ENCODE measurements at regions of chr6 and their contacts with region 1.

Region 1: GRCh38 chr6:132962936-132963868 is 148.8 kb downstream of the RPS12 start:
- DNase-seq: peak; percentile 66 to 91
- H3K4me3 ChIP-seq: no peak overlapping the region
- H3K27ac ChIP-seq: no peak overlapping the region
- H3K4me1 ChIP-seq: peaks cover 0 to 5% (median under 1%) of the 10 kb centered on the region in 4 experiments; a peak in 2 of 7 replicates
- H3K27me3 ChIP-seq: no peaks in the 10 kb centered on the region
- CTCF ChIP-seq: peak; percentile 72 to 88 (median 83)
- EP300 ChIP-seq: no peak
- POLR2A ChIP-seq: no peak
- RAD21 ChIP-seq: peak; percentile 94

Region 2: GRCh38 chr6:132780770-132781371 is 182.3 kb before region 1 on chr6:
- CTCF ChIA-PET with region 1: no interaction called
- POLR2A ChIA-PET with region 1: no interaction called
- DNase-seq: no peak
- H3K4me3 ChIP-seq: no peak overlapping the region
- H3K27ac ChIP-seq: no peak overlapping the region
- H3K4me1 ChIP-seq: no peaks in the 10 kb centered on the region
- H3K27me3 ChIP-seq: no peaks in the 10 kb centered on the region
- CTCF ChIP-seq: peak in 1 of 3 experiments; percentile 20; a peak in 1 of 4 replicates
- EP300 ChIP-seq: no peak
- POLR2A ChIP-seq: no peak
- RAD21 ChIP-seq: peak in 1 of 2 experiments; percentile 22; a peak in 1 of 4 replicates

Region 3: GRCh38 chr6:132830334-132830751 is 132.9 kb before region 1 on chr6:
- CTCF ChIA-PET with region 1: interaction called, 49 read pairs
- POLR2A ChIA-PET with region 1: interaction called, 4 read pairs
- DNase-seq: no peak
- H3K4me3 ChIP-seq: no peak overlapping the region
- H3K27ac ChIP-seq: no peak overlapping the region
- H3K4me1 ChIP-seq: no peaks in the 10 kb centered on the region
- H3K27me3 ChIP-seq: no peaks in the 10 kb centered on the region
- CTCF ChIP-seq: peak in 2 of 3 experiments; percentile 55 to 61; a peak in 3 of 4 replicates
- EP300 ChIP-seq: no peak
- POLR2A ChIP-seq: no peak
- RAD21 ChIP-seq: peak; percentile 92 to 93

Region 4: DNA sequence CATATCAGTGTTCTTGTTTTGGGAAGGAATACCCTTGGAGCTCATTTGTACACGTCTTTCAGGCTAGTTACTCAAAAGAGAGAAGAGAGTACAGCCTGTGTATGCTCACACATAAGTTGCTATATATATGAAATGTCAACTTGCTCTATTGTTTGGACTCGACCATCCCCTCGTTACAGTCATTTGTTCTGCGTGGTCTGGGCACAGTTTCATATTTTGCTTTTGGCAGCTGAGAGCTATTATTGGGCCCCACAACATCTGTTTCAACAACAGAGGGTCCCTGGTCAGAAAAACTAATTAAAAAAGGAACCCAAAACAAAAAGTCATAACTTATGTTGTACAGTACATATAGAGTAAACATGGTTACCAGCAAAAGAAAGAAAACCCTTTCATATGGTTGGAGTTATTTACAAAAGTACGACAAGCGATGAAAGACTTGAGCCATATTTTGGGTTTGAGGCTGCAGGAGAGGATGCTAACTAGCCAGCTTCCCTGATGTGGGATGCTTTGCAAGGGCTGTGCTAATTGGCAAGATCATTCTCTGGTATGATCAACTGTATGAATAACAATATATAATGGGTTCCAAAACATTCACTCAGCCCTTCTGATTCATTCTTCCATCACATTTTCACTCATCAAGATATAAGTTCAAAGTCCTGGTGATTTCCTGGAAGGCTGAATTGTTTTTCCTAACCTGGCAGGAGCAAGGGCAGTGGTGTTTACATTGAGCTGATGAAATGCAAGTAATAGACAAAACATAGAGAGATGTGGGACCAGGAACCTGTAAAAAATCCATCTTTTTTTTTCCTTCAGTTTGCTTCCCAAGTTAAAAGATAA is 11.0 kb before region 1 on chr6:
- CTCF ChIA-PET with region 1: interaction called, 26 read pairs
- POLR2A ChIA-PET with region 1: no interaction called
- DNase-seq: no peak
- H3K4me3 ChIP-seq: no peak overlapping the region
- H3K27ac ChIP-seq: no peak overlapping the region
- H3K4me1 ChIP-seq: no peaks in the 10 kb centered on the region
- H3K27me3 ChIP-seq: no peaks in the 10 kb centered on the region
- CTCF ChIP-seq: no peak
- EP300 ChIP-seq: no peak
- POLR2A ChIP-seq: no peak
- RAD21 ChIP-seq: no peak

Region 5: GRCh38 chr6:133040094-133040802 is 77.0 kb after region 1 on chr6:
- CTCF ChIA-PET with region 1: interaction called, 23 read pairs
- POLR2A ChIA-PET with region 1: no interaction called
- DNase-seq: no peak
- H3K4me3 ChIP-seq: no peak overlapping the region
- H3K27ac ChIP-seq: no peak overlapping the region
- H3K4me1 ChIP-seq: no peaks in the 10 kb centered on the region
- H3K27me3 ChIP-seq: no peaks in the 10 kb centered on the region
- CTCF ChIP-seq: peak in 2 of 3 experiments; percentile 47 to 58; a peak in 2 of 4 replicates
- EP300 ChIP-seq: no peak
- POLR2A ChIP-seq: no peak
- RAD21 ChIP-seq: peak; percentile 57 to 63

Measured in H1 (cell line).